ENCODE measurements at regions of chr10 and their contacts with region 1.

Region 1: DNA sequence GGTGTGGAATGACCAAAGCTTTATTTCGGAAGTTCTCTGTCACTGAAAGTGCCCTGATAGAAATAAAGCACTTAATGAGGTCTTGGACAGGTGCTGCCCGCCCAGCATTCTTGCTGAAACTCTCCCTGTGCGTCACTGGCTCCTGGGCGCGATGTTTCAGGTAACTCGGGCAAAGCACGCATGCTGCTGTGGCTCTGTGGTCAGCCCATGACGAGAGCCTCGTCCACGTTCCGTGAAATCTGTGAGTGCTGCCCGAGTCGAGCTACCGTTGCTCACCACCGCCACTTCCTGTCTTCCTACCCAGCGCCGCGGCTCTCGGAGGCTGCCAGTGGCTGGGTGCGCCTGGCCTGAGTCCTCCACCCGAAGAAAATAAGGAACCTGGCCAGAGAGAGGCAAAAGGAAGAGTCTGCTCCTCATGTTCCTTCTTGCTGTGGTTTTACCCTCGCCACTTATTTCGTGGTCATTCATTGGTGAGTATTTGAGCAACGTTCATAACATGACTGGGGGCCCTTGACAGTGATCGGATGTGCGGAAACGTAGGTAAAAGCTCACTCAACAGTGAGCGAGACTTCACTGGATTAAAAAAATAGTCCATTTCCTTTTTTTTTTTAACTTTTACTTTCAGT is 95.5 kb downstream of the MAP3K8 start:
- DNase-seq: peak; percentile 77
- ATAC-seq: peak; percentile 87
- H3K4me3 ChIP-seq: peak overlapping the region; percentile 48
- H3K27ac ChIP-seq: peak overlapping the region; percentile 97
- H3K4me1 ChIP-seq: peaks cover 33% of the 10 kb centered on the region
- H3K27me3 ChIP-seq: no peaks in the 10 kb centered on the region
- CTCF ChIP-seq: no peak
- EP300 ChIP-seq: peak; percentile 97 to 99; a peak in 3 of 4 replicates
- POLR2A ChIP-seq: peak; percentile 88
- RAD21 ChIP-seq: 0 out of 2 replicates have a peak, but pooled peaks have one; percentile 11

Region 2: DNA sequence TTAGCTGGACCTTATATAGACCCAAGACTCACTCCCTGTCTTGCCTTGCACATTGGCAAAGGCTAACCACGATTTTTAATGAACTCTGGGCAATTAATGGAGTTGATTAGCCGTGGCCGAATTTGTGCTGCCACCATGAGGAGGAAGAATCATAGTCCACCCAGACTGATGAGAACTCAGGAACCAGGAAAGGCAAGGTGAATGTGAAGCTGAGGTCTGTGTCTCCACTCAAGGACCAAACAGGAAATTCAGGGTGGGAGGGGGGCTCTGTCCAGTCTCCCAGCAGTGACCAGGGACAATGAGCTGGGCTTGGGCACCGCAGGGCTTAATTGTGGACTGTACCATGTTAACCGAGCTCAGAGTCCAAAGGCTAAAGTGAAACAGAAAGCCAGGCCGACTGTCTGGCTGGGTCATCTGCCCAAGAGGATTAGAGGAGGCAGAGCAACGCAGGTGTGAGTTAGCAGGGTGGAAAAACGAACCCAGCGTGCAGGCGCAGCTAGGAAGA is 343.1 kb before region 1 on chr10:
- CTCF ChIA-PET with region 1: no interaction called
- POLR2A ChIA-PET with region 1: no interaction called
- RAD21 ChIA-PET with region 1: no interaction called
- SMC1A ChIA-PET with region 1: no interaction called
- in situ Hi-C with region 1: no loop called
- intact Hi-C with region 1: no loop called
- DNase-seq: no peak
- ATAC-seq: peak; percentile 70
- H3K4me3 ChIP-seq: no peak overlapping the region; the same call in 1 of the 2 replicates
- H3K27ac ChIP-seq: no peak overlapping the region
- H3K4me1 ChIP-seq: no peaks in the 10 kb centered on the region
- H3K27me3 ChIP-seq: no peaks in the 10 kb centered on the region
- CTCF ChIP-seq: peak in 1 of 3 experiments; percentile 11; a peak in 2 of 6 replicates
- EP300 ChIP-seq: no peak
- POLR2A ChIP-seq: no peak
- RAD21 ChIP-seq: no peak

Region 3: GRCh38 chr10:30324448-30325110 is 204.9 kb before region 1 on chr10:
- CTCF ChIA-PET with region 1: no interaction called
- POLR2A ChIA-PET with region 1: no interaction called
- RAD21 ChIA-PET with region 1: no interaction called
- SMC1A ChIA-PET with region 1: no interaction called
- in situ Hi-C with region 1: no loop called
- intact Hi-C with region 1: no loop called
- DNase-seq: no peak
- ATAC-seq: no peak
- H3K4me3 ChIP-seq: no peak overlapping the region
- H3K27ac ChIP-seq: no peak overlapping the region
- H3K4me1 ChIP-seq: no peaks in the 10 kb centered on the region
- H3K27me3 ChIP-seq: no peaks in the 10 kb centered on the region
- CTCF ChIP-seq: no peak
- EP300 ChIP-seq: no peak
- POLR2A ChIP-seq: no peak
- RAD21 ChIP-seq: no peak

Region 4: GRCh38 chr10:30422981-30423654 is 106.4 kb before region 1 on chr10:
- CTCF ChIA-PET with region 1: interaction called, 217 read pairs
- POLR2A ChIA-PET with region 1: interaction called, 15 read pairs
- RAD21 ChIA-PET with region 1: interaction called, 198 read pairs
- SMC1A ChIA-PET with region 1: interaction called, 284 read pairs
- in situ Hi-C with region 1: loop called (anchors 5 kb)
- intact Hi-C with region 1: no loop called
- DNase-seq: no peak
- ATAC-seq: no peak
- H3K4me3 ChIP-seq: no peak overlapping the region; the same call in 1 of the 2 replicates
- H3K27ac ChIP-seq: no peak overlapping the region; the same call in none of the 2 replicates
- H3K4me1 ChIP-seq: peaks cover 61% of the 10 kb centered on the region
- H3K27me3 ChIP-seq: no peaks in the 10 kb centered on the region
- CTCF ChIP-seq: no peak
- EP300 ChIP-seq: no peak
- POLR2A ChIP-seq: no peak
- RAD21 ChIP-seq: no peak

Region 5: DNA sequence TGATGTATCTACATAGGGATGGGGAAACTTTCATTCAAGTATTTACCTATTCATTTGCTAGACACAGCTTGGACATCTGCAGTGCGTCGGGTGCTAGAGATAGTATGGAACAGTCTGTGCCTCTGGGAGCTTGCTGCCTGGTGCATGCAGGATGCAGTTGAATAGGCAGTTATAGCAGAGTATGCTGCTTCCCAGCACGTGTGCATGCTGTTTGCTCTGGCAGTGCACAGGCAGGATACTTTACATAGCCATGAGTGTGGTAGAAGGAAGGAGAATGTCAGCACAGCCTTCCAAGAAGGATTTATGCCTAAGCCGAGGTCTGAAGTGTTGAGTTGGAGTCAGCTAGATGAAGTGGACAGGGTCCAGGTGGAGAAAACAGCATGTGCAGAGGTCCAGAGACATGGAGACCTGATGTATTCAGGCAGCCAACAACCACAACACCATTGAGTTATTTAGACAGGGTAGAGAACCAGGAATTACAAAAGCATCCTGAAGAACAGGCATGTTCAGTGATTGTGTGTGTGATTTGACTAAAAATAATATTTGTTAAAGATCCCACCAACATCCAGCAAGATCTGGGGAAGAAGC is 87.4 kb before region 1 on chr10:
- CTCF ChIA-PET with region 1: interaction called, 123 read pairs
- POLR2A ChIA-PET with region 1: interaction called, 113 read pairs
- RAD21 ChIA-PET with region 1: interaction called, 48 read pairs
- SMC1A ChIA-PET with region 1: interaction called, 284 read pairs
- in situ Hi-C with region 1: no loop called
- intact Hi-C with region 1: no loop called
- DNase-seq: no peak
- ATAC-seq: peak; percentile 13
- H3K4me3 ChIP-seq: peak overlapping the region; percentile 13; the same call in 1 of the 2 replicates
- H3K27ac ChIP-seq: no peak overlapping the region
- H3K4me1 ChIP-seq: peaks cover 16% of the 10 kb centered on the region
- H3K27me3 ChIP-seq: no peaks in the 10 kb centered on the region
- CTCF ChIP-seq: no peak
- EP300 ChIP-seq: no peak
- POLR2A ChIP-seq: peak; percentile 61
- RAD21 ChIP-seq: no peak

Region 6: DNA sequence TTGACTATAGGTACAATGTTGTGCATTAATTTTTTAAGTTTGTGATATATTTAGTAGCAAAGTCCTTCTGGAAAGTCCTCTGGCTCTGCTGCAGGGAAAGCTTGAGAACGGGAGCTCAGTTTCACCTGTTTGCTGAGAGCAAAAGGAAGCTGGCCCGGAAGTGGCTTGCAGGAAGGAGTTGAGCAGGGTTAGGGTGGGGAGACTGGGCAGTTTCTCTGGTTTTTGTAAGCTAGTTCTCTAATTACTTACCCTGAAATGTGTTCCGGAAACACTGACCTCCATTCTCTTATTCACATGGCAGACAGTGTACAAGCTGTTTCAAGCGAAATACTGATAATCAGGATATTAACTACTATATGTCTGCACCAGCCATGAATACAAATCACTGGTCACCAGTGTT is 73.2 kb before region 1 on chr10:
- CTCF ChIA-PET with region 1: interaction called, 6 read pairs
- POLR2A ChIA-PET with region 1: no interaction called
- RAD21 ChIA-PET with region 1: interaction called, 16 read pairs
- SMC1A ChIA-PET with region 1: interaction called, 35 read pairs
- in situ Hi-C with region 1: no loop called
- intact Hi-C with region 1: loop called (anchors 1 kb)
- DNase-seq: peak; percentile 65
- ATAC-seq: peak; percentile 88
- H3K4me3 ChIP-seq: no peak overlapping the region
- H3K27ac ChIP-seq: peak overlapping the region; percentile 64
- H3K4me1 ChIP-seq: peaks cover 15% of the 10 kb centered on the region
- H3K27me3 ChIP-seq: no peaks in the 10 kb centered on the region
- CTCF ChIP-seq: no peak
- EP300 ChIP-seq: no peak
- POLR2A ChIP-seq: no peak
- RAD21 ChIP-seq: no peak; the same call in 1 of the 2 replicates

Region 7: DNA sequence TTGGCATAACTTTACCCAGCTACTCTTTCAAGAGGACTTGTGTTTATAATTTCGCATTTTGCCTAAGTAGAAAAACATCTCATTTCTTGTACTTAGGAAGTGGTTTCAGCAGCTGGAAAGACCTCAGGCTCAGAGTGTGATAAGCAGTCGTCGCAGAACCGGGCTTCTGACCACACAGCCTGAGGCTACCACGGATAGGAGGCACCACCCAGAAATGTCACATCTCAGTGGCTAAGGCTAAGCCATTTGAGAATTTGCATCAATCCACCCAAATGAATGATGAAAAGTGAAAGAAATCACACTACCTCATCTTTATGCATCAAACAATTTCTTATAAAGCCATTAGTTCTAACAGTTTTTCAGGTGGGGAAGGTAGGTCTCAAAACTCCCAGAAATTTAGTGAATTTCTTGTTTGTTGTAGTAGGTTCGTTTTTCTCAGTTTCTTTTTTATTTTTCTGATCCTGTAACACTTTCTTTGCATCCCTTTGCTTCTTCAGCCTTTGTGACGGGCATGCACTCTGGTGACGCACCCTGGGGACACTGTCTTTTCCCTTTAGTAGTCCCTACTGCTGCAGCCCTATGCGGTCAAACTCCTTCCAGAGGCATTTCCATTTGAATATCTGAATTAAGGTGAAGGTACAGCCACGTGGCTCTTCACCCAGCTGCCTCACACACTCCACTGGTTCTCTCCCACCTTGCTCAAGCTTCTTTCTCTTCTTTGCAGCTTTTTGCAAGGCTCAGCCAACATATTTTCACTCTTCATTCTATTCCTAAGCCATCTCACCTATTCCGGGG is 27.0 kb before region 1 on chr10:
- CTCF ChIA-PET with region 1: interaction called, 41 read pairs
- POLR2A ChIA-PET with region 1: interaction called, 8 read pairs
- RAD21 ChIA-PET with region 1: interaction called, 165 read pairs
- SMC1A ChIA-PET with region 1: interaction called, 71 read pairs
- in situ Hi-C with region 1: no loop called
- intact Hi-C with region 1: loop called (anchors 2 kb)
- DNase-seq: no peak
- ATAC-seq: peak; percentile 81
- H3K4me3 ChIP-seq: peak overlapping the region; percentile 29; the same call in 1 of the 2 replicates
- H3K27ac ChIP-seq: peak overlapping the region; percentile 81
- H3K4me1 ChIP-seq: peaks cover 45% of the 10 kb centered on the region
- H3K27me3 ChIP-seq: no peaks in the 10 kb centered on the region
- CTCF ChIP-seq: no peak
- EP300 ChIP-seq: peak; percentile 56 to 60; a peak in 2 of 4 replicates
- POLR2A ChIP-seq: no peak
- RAD21 ChIP-seq: no peak

Region 8: DNA sequence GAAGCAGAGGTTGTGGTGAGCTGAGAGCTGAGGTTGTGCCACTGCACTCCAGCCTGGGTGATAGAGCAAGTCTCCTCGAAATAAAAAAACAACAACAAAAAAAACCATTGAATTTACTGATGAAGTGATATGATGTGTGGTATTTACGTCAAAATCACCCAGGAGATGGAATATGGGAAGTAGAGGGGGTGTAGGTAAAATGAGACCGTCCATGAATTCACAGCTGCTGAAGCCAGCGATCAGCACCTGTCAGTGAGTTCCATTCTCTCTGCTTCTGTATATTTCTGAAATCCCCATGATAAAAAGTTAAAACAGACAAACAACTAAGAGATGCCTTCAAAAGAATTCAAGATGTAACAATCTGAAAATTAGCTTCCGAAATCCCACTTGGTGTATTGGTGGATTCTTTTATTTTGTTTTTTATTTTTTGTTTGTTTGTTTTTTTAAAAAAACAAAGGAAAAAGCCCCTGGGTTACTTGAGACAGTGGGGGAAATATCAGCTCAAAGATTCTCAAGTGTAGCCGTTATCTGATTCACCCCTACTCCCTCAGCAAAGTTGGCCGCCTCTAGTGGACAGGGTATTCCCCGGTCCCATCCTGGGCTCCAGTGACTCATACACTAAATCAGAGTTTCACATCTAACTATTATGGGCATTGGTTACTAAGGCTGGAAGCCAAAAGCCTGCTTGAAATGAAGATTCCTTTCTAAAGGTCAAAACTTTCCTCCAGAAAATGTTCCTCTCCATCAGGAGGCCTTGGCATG is 19.1 kb before region 1 on chr10:
- CTCF ChIA-PET with region 1: interaction called, 4 read pairs
- POLR2A ChIA-PET with region 1: interaction called, 8 read pairs
- RAD21 ChIA-PET with region 1: interaction called, 32 read pairs
- SMC1A ChIA-PET with region 1: interaction called, 92 read pairs
- in situ Hi-C with region 1: no loop called
- intact Hi-C with region 1: loop called (anchors 2 kb)
- DNase-seq: no peak
- ATAC-seq: peak; percentile 95
- H3K4me3 ChIP-seq: 0 out of 2 replicates have a peak overlapping the region, but pooled peaks have one; percentile 23
- H3K27ac ChIP-seq: peak overlapping the region; percentile 85
- H3K4me1 ChIP-seq: peaks cover 29% of the 10 kb centered on the region
- H3K27me3 ChIP-seq: no peaks in the 10 kb centered on the region
- CTCF ChIP-seq: peak in 2 of 3 experiments; percentile 7 to 23; a peak in 1 of 6 replicates
- EP300 ChIP-seq: no peak
- POLR2A ChIP-seq: no peak
- RAD21 ChIP-seq: no peak

Measured in GM12878 (cell line).